ENCODE measurements at regions of chr12 and their contacts with region 1.

Region 1: DNA sequence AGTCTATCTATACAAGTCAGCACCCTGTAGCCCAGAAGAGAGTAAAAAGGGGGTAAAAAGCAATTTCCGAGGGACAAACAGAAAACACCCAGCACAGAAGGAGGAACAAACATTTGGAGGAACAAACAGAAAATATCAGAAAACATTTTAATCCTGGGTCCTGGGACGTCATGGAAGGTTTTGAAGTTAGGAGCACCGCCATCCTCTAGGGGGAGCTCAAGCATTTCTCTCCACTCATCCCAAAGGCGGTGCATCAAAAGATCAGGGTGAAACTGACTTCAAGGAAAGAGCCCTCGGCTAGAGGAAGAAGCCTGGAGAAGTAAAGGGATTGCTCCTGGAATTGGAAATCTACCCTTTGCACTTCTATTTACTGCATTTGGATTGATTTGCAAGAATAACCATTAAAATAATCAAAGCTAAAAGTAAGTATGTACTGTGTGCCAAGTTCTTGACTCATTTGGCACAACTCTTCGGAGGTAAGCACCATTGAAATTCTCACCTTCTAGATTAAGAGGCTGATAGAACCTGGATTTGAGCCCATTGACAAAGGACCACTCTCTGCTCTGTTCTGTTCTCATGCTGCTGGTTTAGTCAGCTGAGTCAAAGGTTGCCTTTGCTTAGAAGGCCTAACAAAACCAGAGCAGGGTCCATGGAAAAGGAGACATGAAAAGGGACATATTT is 17.2 kb upstream of the POC1B start:
- DNase-seq: peak; percentile 51 to 68 (median 53)
- ATAC-seq: peak; percentile 77 to 80
- H3K4me3 ChIP-seq: no peak overlapping the region
- H3K27ac ChIP-seq: no peak overlapping the region
- H3K4me1 ChIP-seq: peaks cover 3% of the 10 kb centered on the region
- H3K27me3 ChIP-seq: no peaks in the 10 kb centered on the region

Region 2: DNA sequence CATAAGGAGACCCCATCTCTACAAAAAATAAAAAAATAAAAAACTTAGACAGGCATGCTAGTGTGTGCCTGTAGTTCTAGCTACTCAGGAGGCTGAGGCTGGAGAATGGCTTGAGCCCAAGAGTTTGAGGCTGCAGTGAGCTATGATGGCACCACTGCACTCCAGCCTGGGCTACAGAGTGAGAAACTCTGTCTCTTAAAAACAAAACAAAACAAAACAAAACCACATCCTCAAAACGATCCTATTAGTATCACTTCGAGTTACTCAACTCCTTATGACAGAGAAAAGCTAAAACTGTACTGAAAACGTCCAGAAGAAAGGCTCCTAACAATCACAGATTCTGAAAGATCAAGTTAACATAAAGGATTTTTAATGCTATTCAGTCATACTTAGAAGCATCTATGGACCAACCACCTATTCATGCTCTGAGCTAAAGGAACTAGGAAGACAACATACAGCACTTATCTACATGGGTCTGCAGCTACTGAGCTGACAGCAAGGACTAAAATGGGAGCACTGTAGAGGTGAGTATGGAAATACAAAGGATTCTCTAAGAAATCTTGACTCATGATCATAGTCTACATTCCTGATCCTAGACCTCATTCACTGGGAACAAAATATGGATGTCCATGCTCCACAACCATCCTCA is 115.4 kb before region 1 on chr12:
- intact Hi-C with region 1: no loop called
- DNase-seq: no peak
- ATAC-seq: no peak
- H3K4me3 ChIP-seq: no peak overlapping the region
- H3K27ac ChIP-seq: no peak overlapping the region
- H3K4me1 ChIP-seq: no peaks in the 10 kb centered on the region
- H3K27me3 ChIP-seq: no peaks in the 10 kb centered on the region

Region 3: GRCh38 chr12:89709995-89710872 is 167.2 kb after region 1 on chr12:
- intact Hi-C with region 1: loop called in 1 of 4 experiments (anchors 10 kb)
- DNase-seq: peak; percentile 70 to 87 (median 84)
- ATAC-seq: peak in 1 of 2 donors; percentile 55
- H3K4me3 ChIP-seq: peak overlapping the region; percentile 77
- H3K27ac ChIP-seq: peak overlapping the region; percentile 98
- H3K4me1 ChIP-seq: no peaks in the 10 kb centered on the region
- H3K27me3 ChIP-seq: no peaks in the 10 kb centered on the region

Region 4: DNA sequence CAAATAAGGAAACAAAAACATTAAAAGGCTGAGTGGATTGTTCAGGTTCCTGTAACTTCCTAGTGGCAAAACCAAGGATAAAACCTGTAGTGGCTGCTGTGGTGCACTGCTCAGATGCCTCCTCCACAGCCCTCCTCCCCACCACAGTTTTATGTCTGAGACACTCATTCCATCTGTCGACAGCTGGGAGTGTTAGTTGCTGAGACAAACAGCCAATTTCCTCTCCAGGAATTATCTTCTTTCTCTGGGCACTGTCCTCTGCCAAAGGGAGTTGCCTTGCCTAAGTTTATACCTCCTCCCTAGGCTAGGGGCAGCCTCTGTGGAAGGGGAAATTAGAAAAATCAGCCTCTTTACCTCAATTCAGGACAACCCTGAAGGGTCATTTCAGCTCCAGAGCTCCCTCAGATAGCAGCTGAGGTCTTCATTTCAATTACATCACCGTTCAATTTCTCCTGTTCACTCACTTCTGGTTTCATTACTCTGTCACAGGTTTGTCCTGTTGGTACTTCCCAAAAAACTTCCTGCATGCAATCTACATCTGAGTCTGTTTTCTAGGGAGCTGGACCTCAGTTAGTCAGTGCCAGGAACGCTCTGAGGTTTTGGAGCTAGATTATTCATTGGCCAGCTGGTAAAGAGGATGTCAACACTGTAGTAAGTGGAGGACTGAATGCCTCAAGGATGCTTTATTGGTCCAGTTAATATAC is 240.5 kb after region 1 on chr12:
- intact Hi-C with region 1: no loop called
- DNase-seq: peak in 2 of 3 donors; percentile 14 to 39
- ATAC-seq: peak; percentile 95 to 97
- H3K4me3 ChIP-seq: no peak overlapping the region
- H3K27ac ChIP-seq: no peak overlapping the region
- H3K4me1 ChIP-seq: no peaks in the 10 kb centered on the region
- H3K27me3 ChIP-seq: no peaks in the 10 kb centered on the region

Region 5: GRCh38 chr12:90102957-90103652 is 560.1 kb after region 1 on chr12:
- intact Hi-C with region 1: loop called in 1 of 4 experiments (anchors 10 kb)
- DNase-seq: no peak
- ATAC-seq: peak in 1 of 2 donors; percentile 56
- H3K4me3 ChIP-seq: no peak overlapping the region
- H3K27ac ChIP-seq: no peak overlapping the region
- H3K4me1 ChIP-seq: no peaks in the 10 kb centered on the region
- H3K27me3 ChIP-seq: no peaks in the 10 kb centered on the region

Region 6: GRCh38 chr12:90111791-90112580 is 568.9 kb after region 1 on chr12:
- intact Hi-C with region 1: loop called in 2 of 4 experiments (anchors 10 kb)
- DNase-seq: no peak
- ATAC-seq: no peak
- H3K4me3 ChIP-seq: peak overlapping the region; percentile 21
- H3K27ac ChIP-seq: no peak overlapping the region
- H3K4me1 ChIP-seq: no peaks in the 10 kb centered on the region
- H3K27me3 ChIP-seq: no peaks in the 10 kb centered on the region

Region 7: GRCh38 chr12:90211017-90211416 is 668.0 kb after region 1 on chr12:
- intact Hi-C with region 1: no loop called
- DNase-seq: no peak
- ATAC-seq: no peak
- H3K4me3 ChIP-seq: no peak overlapping the region
- H3K27ac ChIP-seq: no peak overlapping the region
- H3K4me1 ChIP-seq: no peaks in the 10 kb centered on the region
- H3K27me3 ChIP-seq: no peaks in the 10 kb centered on the region

Region 8: GRCh38 chr12:90854136-90854689 is 1311.2 kb after region 1 on chr12:
- intact Hi-C with region 1: loop called in 1 of 4 experiments (anchors 10 kb)
- DNase-seq: no peak
- ATAC-seq: no peak
- H3K4me3 ChIP-seq: no peak overlapping the region
- H3K27ac ChIP-seq: no peak overlapping the region
- H3K4me1 ChIP-seq: no peaks in the 10 kb centered on the region
- H3K27me3 ChIP-seq: no peaks in the 10 kb centered on the region